Activated T-helper 2 cell treated with anti-CD3 and anti-CD28 coated beads, Interferon-gamma antibody, Interleukin-2, Interleukin-4, amounts not matched to agents 10 μg/mL and 5 μg/mL and 100 μg/mL, durations not matched to agents 14 hours and 24 hours and 36 hours (primary cell): ENCODE measurements at regions of chr1 and their contacts with region 1.

Region 1: DNA sequence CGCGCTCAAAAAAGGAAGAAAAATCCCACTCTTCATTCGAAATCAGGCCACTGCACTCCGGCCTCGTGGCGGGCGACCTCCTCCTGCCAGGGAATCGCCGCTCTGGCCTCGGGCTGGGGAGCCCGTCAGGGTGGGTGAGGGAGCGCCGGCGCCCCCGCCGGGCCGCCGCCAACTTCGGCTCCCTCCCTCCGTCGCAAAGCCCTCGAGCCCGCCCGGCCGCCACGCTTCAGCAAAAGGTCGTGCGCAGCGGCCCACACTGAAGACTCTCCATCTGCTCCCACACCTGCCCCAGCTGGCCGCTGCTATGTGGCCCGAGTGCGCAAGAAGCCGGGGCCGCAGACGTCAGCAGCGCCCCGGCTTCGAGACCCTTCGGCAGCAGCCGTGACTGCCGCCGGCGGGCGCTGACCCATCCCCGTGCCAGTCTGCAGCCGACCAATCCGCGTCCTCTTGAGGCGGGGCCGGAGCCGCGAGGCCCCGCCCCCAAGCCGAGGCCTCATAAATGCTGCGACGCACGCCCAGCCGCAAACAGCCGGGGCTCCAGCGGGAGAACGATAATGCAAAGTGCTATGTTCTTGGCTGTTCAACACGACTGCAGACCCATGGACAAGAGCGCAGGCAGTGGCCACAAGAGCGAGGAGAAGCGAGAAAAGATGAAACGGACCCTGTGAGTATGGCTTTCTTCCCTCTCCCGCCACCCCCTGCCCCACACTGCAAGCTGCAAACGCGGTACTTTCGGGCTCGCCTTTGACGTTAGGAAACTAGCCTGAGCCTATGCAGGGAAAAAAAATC is at the start of gene RGS2:
- DNase-seq: peak; percentile 82
- H3K4me3 Mint-ChIP-seq: peak within 1 kb of the TSS; percentile 95
- H3K27ac Mint-ChIP-seq: peak within 1 kb of the TSS; percentile 93
- H3K4me1 Mint-ChIP-seq: peaks cover 38% of the 10 kb centered on the region
- H3K27me3 Mint-ChIP-seq: peaks cover 7% of the 10 kb centered on the region
- total RNA-seq, gene RGS2: 5.0 and 5.8 TPM in 2 replicates

Region 2: DNA sequence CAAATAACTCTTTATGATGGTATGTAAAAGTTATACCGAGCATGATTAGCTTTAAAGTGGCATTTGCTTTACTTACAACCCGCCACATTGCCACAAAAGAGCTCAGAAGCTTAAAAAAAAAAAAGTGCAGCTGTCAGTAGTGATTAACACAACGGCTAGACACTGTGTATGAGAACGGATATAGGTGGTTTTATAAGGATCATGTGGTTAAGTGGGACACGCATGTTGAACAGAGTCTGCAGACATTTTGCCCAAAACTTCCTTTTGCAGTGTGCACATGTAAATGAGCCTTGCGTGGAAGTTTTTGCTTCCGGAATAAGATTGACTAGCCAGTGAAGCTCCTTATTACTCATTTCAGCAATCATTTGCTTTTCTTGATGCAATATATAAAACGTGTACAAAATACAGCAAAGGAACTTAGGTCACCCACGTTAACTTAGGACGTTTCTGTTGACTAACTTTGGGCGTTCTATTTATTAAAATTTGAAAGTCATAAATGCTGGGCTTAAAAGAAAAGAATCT is 291.9 kb before region 1 on chr1:
- intact Hi-C with region 1: loop called (anchors 2 kb)
- DNase-seq: peak; percentile 69
- H3K4me3 Mint-ChIP-seq: peak overlapping the region; percentile 66
- H3K27ac Mint-ChIP-seq: peak overlapping the region; percentile 77
- H3K4me1 Mint-ChIP-seq: peaks cover 55% of the 10 kb centered on the region
- H3K27me3 Mint-ChIP-seq: peaks cover 2% of the 10 kb centered on the region

Region 3: DNA sequence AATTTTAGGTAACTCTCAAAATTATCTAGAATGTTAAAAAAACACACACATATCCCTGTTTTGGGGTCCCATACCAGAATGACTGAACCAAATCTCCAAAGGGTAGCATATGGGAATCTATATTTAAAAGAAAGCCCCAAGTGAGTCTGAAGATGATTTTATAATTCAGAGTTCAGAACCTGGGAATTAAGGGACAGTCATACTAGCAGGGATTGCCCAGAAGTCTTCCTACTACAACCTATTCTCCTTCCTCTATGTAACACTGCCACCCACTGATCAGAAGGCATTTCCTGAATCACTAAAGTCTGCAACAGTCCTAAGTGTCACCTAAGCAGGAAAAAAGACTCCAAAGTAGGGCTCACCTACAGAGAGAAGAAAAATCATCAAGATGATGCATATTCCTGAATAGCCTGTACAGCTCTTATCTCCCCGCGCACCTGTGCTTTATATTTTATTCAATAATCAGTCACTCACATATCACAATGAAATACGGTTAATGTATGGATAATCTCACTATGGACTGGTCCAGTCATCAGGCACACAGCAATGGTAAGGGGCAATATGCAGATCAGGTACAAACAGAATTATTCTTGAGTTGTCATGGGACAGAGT is 228.3 kb before region 1 on chr1:
- intact Hi-C with region 1: loop called (anchors 1 kb)
- DNase-seq: no peak
- H3K4me3 Mint-ChIP-seq: peak overlapping the region; percentile 7
- H3K27ac Mint-ChIP-seq: no peak overlapping the region
- H3K4me1 Mint-ChIP-seq: peaks cover 39% of the 10 kb centered on the region
- H3K27me3 Mint-ChIP-seq: peaks cover 8% of the 10 kb centered on the region

Region 4: DNA sequence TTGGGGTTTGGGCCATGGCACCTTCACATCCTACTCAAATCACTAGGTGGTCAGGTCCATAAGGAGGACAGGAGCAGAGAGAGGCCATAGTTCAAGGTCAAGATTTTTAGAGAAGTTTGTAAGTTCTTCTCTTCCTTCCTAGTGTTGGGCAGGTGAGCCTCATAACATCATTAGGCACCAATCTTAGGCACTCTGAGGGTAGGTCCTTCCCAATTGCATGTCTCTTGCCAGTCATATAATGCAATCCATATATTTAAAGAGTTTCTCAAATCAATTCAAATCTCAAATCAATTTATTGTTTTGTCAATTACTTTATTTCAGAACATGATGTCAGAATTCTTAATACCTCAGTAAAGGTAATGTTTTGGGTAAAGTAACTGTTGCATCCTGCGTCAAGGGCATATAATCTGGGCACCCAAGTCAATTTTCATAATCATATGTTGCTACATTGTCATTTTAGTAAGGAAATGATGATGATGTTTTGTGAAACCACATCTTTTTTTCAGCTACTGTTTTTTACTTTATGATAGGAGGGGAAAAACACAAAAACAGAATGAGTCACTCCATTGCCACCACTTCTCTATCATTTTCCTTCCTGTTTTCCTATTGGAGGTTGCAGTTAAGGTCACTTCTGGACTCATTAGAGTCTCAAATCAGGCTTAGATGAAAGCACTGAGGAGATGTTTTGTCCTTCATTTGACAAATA is 127.8 kb after region 1 on chr1:
- intact Hi-C with region 1: loop called (anchors 2 kb)
- DNase-seq: no peak
- H3K4me3 Mint-ChIP-seq: no peak overlapping the region
- H3K27ac Mint-ChIP-seq: peak overlapping the region; percentile 53
- H3K4me1 Mint-ChIP-seq: peaks cover 22% of the 10 kb centered on the region
- H3K27me3 Mint-ChIP-seq: no peaks in the 10 kb centered on the region

Region 5: DNA sequence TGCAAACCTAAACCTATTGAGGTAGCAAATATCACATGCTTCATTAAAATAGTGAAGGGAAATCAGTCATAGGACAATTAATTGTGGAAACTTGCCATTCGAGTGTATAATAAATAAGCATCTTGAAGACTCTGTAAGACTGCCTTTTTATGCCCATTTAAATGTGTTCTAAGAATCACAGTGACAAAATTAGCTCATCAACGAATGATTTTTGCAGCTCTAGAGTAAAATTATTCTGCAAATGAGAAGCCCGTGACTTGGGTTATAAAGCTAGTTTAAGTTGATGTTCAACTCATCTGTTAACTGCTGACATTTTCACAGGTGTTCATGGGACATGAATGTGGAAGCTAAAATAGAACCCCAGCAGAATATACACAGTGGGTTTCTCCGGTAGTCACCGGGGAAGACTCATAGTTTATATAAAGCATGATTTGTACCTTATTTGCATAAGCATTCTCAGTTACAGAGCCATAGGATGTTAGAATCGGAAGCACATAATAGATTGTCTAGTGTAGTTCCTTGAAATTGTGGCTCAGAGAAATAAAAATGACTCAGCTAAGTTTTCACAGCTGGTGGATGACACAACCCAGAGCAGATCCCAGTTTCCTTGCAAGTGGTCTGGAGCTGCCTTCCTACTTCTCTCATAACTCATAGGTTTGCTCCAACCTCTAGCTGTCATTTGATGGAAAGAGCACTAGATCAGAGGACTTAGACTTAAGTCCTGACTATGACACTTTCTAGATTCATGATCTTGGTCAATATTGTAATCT is 143.2 kb after region 1 on chr1:
- intact Hi-C with region 1: no loop called
- DNase-seq: no peak
- H3K4me3 Mint-ChIP-seq: no peak overlapping the region
- H3K27ac Mint-ChIP-seq: no peak overlapping the region
- H3K4me1 Mint-ChIP-seq: no peaks in the 10 kb centered on the region
- H3K27me3 Mint-ChIP-seq: no peaks in the 10 kb centered on the region

Region 6: DNA sequence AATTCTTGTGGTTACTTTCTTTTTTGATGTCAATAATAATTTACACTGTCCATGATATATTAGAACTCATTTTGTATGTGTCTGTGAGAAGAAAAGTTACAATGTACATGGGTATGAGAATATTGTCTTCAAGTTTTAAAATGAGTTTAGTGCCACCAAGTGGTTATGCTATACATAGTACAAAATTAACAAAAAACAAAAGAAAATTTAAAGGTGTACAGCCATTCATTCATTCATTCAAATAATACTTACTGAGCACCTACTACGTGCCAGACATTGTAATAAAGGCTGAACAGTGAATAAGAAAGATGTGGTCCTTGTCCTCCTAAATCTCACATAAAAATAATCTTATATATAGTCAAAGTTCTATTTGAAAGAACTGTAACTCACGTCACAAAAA is 222.7 kb after region 1 on chr1:
- intact Hi-C with region 1: loop called (anchors 5 kb)
- DNase-seq: no peak
- H3K4me3 Mint-ChIP-seq: no peak overlapping the region
- H3K27ac Mint-ChIP-seq: no peak overlapping the region
- H3K4me1 Mint-ChIP-seq: peaks cover 17% of the 10 kb centered on the region
- H3K27me3 Mint-ChIP-seq: no peaks in the 10 kb centered on the region

Region 7: DNA sequence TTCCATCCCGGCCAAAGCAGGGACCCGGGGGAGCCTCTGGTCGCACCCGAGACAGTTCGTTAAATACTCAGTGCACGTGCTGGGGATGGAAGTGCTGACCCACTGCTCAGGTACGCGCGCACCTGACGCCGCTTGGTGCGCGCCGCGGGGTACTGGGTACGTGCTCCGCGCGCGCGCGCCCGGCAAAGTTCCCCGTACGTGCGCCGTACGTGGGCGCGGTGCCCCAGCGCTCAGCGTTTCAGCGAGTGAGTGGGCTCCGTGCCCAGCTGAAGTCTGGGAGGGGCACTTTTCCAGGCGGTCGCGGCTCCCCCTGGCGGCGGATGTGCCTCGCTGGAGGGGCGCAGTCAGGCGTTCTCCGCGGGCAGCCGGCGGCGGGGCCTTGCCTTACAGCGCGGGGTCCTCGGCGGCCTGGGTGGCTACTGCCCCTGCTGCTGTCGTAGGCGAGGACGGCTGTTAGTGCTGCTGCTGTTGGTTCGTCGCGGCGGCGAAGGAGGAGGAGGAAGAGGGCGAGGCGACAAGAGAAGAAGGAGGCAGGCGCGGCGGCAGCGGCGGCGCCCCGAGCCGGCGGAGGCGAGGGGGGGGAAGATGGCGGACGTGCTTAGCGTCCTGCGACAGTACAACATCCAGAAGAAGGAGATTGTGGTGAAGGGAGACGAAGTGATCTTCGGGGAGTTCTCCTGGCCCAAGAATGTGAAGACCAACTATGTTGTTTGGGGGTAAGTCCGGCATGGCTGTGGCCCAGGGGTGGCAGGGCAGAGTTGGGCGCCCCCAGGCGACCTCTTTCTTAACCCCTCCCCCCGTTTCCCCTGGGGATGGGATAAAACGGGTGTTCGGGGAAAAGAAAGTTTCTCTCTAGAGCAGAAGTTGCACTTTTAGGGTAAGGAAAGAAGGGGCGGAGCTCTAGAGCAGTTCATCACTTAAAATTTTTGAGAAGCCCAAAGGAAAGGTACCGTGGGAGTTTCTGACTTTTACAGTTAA is 313.2 kb after region 1 on chr1 and contains the start of gene CDC73:
- intact Hi-C with region 1: loop called (anchors 1 kb)
- DNase-seq: peak; percentile 97
- H3K4me3 Mint-ChIP-seq: peak within 1 kb of the TSS; percentile 99
- H3K27ac Mint-ChIP-seq: peak within 1 kb of the TSS; percentile 93
- H3K4me1 Mint-ChIP-seq: peaks cover 49% of the 10 kb centered on the region
- H3K27me3 Mint-ChIP-seq: peaks cover 8% of the 10 kb centered on the region
- total RNA-seq, gene CDC73: 47.0 and 53.3 TPM in 2 replicates

Region 8: GRCh38 chr1:194295685-194296084 is 1487.0 kb after region 1 on chr1:
- intact Hi-C with region 1: loop called (anchors 10 kb)
- DNase-seq: no peak
- H3K4me3 Mint-ChIP-seq: no peak overlapping the region
- H3K27ac Mint-ChIP-seq: no peak overlapping the region
- H3K4me1 Mint-ChIP-seq: peaks cover 17% of the 10 kb centered on the region
- H3K27me3 Mint-ChIP-seq: no peaks in the 10 kb centered on the region